ENCODE measurements at regions of chr14 and their contacts with region 1.

Region 1: GRCh38 chr14:89040460-89041259 is 216.2 kb downstream of the TTC8 start:
- DNase-seq: peak in 1 of 2 donors; percentile 95
- H3K4me3 ChIP-seq: peak overlapping the region; percentile 29 to 41
- H3K27ac ChIP-seq: peak overlapping the region; percentile 87
- H3K4me1 ChIP-seq: peaks cover 10% of the 10 kb centered on the region
- H3K27me3 ChIP-seq: no peaks in the 10 kb centered on the region
- CTCF ChIP-seq: peak; percentile 68 to 97 (median 94)
- POLR2A ChIP-seq: no peak

Region 2: GRCh38 chr14:89158701-89159100 is 118.0 kb after region 1 on chr14:
- intact Hi-C with region 1: loop called (anchors 5 kb)
- DNase-seq: no peak
- H3K4me3 ChIP-seq: no peak overlapping the region
- H3K27ac ChIP-seq: no peak overlapping the region
- H3K4me1 ChIP-seq: no peaks in the 10 kb centered on the region
- H3K27me3 ChIP-seq: no peaks in the 10 kb centered on the region
- CTCF ChIP-seq: no peak
- POLR2A ChIP-seq: no peak

Region 3: GRCh38 chr14:89912667-89913211 is 872.1 kb after region 1 on chr14:
- intact Hi-C with region 1: loop called (anchors 5 kb)
- DNase-seq: no peak
- H3K4me3 ChIP-seq: no peak overlapping the region
- H3K27ac ChIP-seq: no peak overlapping the region
- H3K4me1 ChIP-seq: no peaks in the 10 kb centered on the region
- H3K27me3 ChIP-seq: no peaks in the 10 kb centered on the region
- CTCF ChIP-seq: no peak
- POLR2A ChIP-seq: no peak